Ascending aorta (tissue), 2 donors: ENCODE measurements at regions of chr5 and their contacts with region 1.

Region 1: GRCh38 chr5:152142840-152143469 is 218.3 kb upstream of the GLRA1 start:
- DNase-seq: no peak
- H3K4me3 ChIP-seq: no peak overlapping the region
- H3K27ac ChIP-seq: no peak overlapping the region
- H3K4me1 ChIP-seq: no peaks in the 10 kb centered on the region
- H3K27me3 ChIP-seq: no peaks in the 10 kb centered on the region
- CTCF ChIP-seq: peak; percentile 52 to 87 (median 79)

Region 2: GRCh38 chr5:152259702-152260101 is 116.7 kb after region 1 on chr5:
- intact Hi-C with region 1: loop called (anchors 10 kb)
- DNase-seq: peak in 1 of 2 donors; percentile 9
- H3K4me3 ChIP-seq: no peak overlapping the region
- H3K27ac ChIP-seq: no peak overlapping the region
- H3K4me1 ChIP-seq: no peaks in the 10 kb centered on the region
- H3K27me3 ChIP-seq: no peaks in the 10 kb centered on the region
- CTCF ChIP-seq: no peak

Region 3: GRCh38 chr5:152349683-152350526 is 206.9 kb after region 1 on chr5:
- intact Hi-C with region 1: loop called (anchors 5 kb)
- DNase-seq: no peak
- H3K4me3 ChIP-seq: no peak overlapping the region
- H3K27ac ChIP-seq: no peak overlapping the region
- H3K4me1 ChIP-seq: no peaks in the 10 kb centered on the region
- H3K27me3 ChIP-seq: no peaks in the 10 kb centered on the region
- CTCF ChIP-seq: peak; percentile 36 to 77 (median 72)

Region 4: GRCh38 chr5:152427721-152428120 is 284.8 kb after region 1 on chr5:
- intact Hi-C with region 1: no loop called
- DNase-seq: no peak
- H3K4me3 ChIP-seq: no peak overlapping the region
- H3K27ac ChIP-seq: no peak overlapping the region
- H3K4me1 ChIP-seq: no peaks in the 10 kb centered on the region
- H3K27me3 ChIP-seq: no peaks in the 10 kb centered on the region
- CTCF ChIP-seq: no peak